IMR-90 (cell line): ENCODE measurements at regions of chr1 and their contacts with region 1.

Region 1: GRCh38 chr1:197180252-197180878 is 33.9 kb upstream of the ASPM start:
- DNase-seq: peak; percentile 92
- ATAC-seq: peak; percentile 80
- H3K4me3 ChIP-seq: no peak overlapping the region
- H3K27ac ChIP-seq: no peak overlapping the region
- H3K4me1 ChIP-seq: 0 out of 2 replicates have a peak, but pooled peaks cover 4% of the 10 kb centered on the region
- H3K27me3 ChIP-seq: no peaks in the 10 kb centered on the region
- CTCF ChIP-seq: peak; percentile 82
- POLR2A ChIP-seq: no peak
- RAD21 ChIP-seq: peak; percentile 76

Region 2: GRCh38 chr1:197195100-197195499 is 14.7 kb after region 1 on chr1:
- CTCF ChIA-PET with region 1: interaction called, 5 read pairs
- POLR2A ChIA-PET with region 1: no interaction called
- dilution Hi-C with region 1: no loop called
- in situ Hi-C with region 1: no loop called
- intact Hi-C with region 1: loop called (anchors 2 kb)
- DNase-seq: peak; percentile 18
- ATAC-seq: no peak
- H3K4me3 ChIP-seq: no peak overlapping the region
- H3K27ac ChIP-seq: no peak overlapping the region
- H3K4me1 ChIP-seq: no peaks in the 10 kb centered on the region
- H3K27me3 ChIP-seq: no peaks in the 10 kb centered on the region
- CTCF ChIP-seq: no peak
- POLR2A ChIP-seq: no peak
- RAD21 ChIP-seq: no peak

Region 3: DNA sequence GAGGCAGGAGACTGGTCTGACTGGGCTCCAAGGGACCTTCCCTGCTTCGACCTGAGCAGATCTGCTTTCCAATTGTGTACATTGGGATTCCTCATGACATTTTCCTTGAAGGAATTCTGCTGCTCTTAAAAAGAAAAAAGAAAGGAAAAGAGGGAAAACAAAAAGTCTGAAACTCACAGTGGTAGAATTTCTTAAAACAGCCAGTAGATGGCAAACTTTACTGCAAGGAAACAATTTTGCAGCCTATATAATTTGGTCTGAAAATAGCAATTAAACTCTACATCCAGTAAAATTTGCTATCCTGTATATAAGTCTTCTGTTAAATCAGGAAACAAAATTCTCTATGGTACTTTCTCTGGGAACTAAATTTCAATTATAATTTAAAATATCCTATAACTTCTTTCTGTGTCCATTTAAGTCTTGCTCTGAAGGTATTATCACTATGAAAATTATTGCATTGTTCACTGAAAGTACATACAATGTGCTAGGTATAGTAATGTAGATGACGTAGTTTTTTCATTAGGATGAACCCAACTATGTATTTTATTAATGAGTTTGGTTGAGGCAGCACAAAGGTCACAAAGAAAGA is 147.5 kb after region 1 on chr1:
- CTCF ChIA-PET with region 1: no interaction called
- POLR2A ChIA-PET with region 1: no interaction called
- dilution Hi-C with region 1: no loop called
- in situ Hi-C with region 1: no loop called
- intact Hi-C with region 1: loop called (anchors 5 kb)
- DNase-seq: peak; percentile 16
- ATAC-seq: peak; percentile 49; the same call in 1 of the 2 replicates
- H3K4me3 ChIP-seq: no peak overlapping the region
- H3K27ac ChIP-seq: no peak overlapping the region
- H3K4me1 ChIP-seq: no peaks in the 10 kb centered on the region
- H3K27me3 ChIP-seq: peaks cover 6% of the 10 kb centered on the region
- CTCF ChIP-seq: peak; percentile 61
- POLR2A ChIP-seq: no peak
- RAD21 ChIP-seq: peak; percentile 48

Region 4: DNA sequence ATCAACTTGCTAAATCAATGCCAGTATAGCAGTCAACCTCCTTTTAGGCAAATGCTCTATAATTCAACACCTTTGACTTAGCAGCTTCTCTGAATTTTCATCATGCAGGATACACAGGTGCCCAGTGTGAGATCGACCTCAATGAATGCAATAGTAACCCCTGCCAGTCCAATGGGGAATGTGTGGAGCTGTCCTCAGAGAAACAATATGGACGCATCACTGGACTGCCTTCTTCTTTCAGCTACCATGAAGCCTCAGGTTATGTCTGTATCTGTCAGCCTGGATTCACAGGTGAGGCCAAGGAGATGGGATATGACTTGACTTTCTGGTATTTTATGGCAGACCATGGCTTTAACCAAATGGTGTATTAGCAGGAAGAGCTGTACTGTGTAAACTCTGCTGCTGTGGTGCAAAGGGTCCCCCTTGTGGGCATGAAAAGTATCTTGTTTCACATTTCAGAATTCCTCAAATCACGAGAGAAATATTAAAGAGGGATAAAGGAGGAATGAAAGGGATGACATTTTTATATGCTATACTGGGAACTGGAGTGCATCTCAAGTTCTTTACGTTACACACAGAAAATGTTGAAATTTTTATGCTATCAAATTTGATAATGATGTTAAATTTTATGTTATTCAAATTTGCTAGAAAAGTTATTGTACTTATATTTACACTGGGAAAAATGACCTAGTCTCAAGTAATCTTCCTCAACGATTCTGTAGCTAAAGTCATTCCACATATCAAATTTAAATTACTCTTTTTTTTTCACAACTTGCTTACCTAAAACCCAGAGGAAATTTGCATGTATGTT is 176.6 kb after region 1 on chr1:
- CTCF ChIA-PET with region 1: interaction called, 9 read pairs
- POLR2A ChIA-PET with region 1: no interaction called
- dilution Hi-C with region 1: no loop called
- in situ Hi-C with region 1: no loop called
- intact Hi-C with region 1: loop called (anchors 1 kb)
- DNase-seq: peak; percentile 58
- ATAC-seq: peak; percentile 83
- H3K4me3 ChIP-seq: no peak overlapping the region
- H3K27ac ChIP-seq: no peak overlapping the region
- H3K4me1 ChIP-seq: no peaks in the 10 kb centered on the region
- H3K27me3 ChIP-seq: no peaks in the 10 kb centered on the region
- CTCF ChIP-seq: peak; percentile 70
- POLR2A ChIP-seq: no peak
- RAD21 ChIP-seq: peak; percentile 79